Activated naive CD4-positive, alpha-beta T cell treated with anti-CD3 and anti-CD28 coated beads for 36 hours (primary cell): ENCODE measurements at regions of chr4 and their contacts with region 1.

Region 1: DNA sequence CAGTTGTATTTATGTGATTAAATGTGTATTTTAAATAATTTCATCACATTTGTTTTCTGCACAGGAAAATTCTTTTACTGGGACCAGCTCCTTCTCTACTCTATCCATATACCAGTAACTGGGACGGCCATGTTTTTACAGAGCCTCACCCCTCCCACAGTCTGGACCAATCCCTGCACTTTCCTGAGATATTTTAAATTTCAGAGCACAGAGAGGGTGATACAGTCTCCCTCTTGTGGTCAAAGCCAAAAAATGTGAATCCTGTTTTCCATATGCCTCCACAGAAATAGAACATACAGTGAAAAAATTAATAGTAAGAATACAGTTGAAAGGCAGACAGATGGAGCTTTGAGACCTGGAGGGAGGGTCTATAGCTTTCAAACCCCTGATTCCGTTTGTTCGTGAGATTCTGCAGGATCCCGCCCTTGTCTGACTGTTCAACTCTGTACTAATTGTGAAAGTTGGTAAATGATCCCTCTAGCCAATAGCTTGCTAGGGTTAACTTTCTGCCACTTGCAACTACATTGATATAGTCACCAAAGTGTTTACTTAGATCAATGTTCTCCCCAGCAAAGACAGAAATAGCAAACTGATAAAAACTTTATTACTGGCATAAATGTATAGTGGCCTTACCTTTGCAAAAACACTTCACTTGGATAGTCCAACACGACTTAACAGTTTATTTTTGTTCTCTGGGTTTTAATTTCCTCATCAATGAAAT is 172.2 kb downstream of the PPARGC1A start:
- DNase-seq: peak; percentile 13
- H3K4me3 Mint-ChIP-seq: no peak overlapping the region
- H3K27ac Mint-ChIP-seq: no peak overlapping the region
- H3K4me1 Mint-ChIP-seq: no peaks in the 10 kb centered on the region
- H3K27me3 Mint-ChIP-seq: no peaks in the 10 kb centered on the region

Region 2: GRCh38 chr4:22897520-22898108 is 820.1 kb before region 1 on chr4:
- CTCF ChIA-PET with region 1: no interaction called
- intact Hi-C with region 1: loop called (anchors 5 kb)
- DNase-seq: peak; percentile 38
- H3K4me3 Mint-ChIP-seq: no peak overlapping the region
- H3K27ac Mint-ChIP-seq: no peak overlapping the region
- H3K4me1 Mint-ChIP-seq: no peaks in the 10 kb centered on the region
- H3K27me3 Mint-ChIP-seq: peaks cover 6% of the 10 kb centered on the region

Region 3: DNA sequence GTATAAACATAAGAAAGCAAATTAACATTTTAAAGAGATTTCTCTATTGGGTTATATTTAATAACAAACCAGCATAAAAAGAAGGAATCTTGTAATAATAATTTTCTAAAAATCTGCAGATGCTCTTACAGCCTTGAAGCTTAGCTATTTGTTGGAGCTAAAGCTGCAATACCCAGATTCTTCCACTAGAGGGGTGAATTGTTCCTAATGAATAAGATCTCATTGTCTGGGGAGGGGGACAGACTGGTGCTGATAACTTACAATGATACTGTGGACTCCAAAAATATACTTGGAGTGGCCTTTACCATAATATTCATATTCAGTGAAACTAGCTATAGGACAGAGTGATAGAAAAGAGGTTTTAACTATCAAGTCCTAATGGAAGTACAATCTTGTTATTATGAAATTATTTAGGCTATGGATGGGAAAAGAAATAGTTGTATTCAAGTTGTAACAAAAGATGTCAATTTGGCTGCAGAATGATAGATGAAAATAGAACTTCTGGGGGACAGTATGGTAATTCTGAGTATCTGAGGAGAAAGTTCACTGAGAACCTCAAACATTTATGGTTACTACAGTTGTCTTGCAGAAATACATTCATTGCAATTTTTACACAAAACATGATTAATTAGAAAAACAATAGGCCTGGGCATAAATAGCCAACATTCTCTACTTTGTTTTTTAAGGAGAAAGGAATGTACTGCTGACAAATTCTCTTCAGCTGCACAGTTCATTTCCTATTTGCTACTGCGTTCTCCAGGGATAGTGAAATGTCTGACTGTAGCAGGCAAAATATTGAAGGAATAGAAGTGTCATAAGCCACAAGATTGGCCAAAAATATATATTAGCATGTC is 581.7 kb before region 1 on chr4:
- CTCF ChIA-PET with region 1: no interaction called
- intact Hi-C with region 1: loop called (anchors 2 kb)
- DNase-seq: no peak
- H3K4me3 Mint-ChIP-seq: no peak overlapping the region
- H3K27ac Mint-ChIP-seq: no peak overlapping the region
- H3K4me1 Mint-ChIP-seq: no peaks in the 10 kb centered on the region
- H3K27me3 Mint-ChIP-seq: peaks cover 10% of the 10 kb centered on the region

Region 4: GRCh38 chr4:23269566-23269965 is 448.1 kb before region 1 on chr4:
- CTCF ChIA-PET with region 1: no interaction called
- intact Hi-C with region 1: loop called (anchors 10 kb)
- DNase-seq: no peak
- H3K4me3 Mint-ChIP-seq: no peak overlapping the region
- H3K27ac Mint-ChIP-seq: no peak overlapping the region
- H3K4me1 Mint-ChIP-seq: no peaks in the 10 kb centered on the region
- H3K27me3 Mint-ChIP-seq: peaks cover 5% of the 10 kb centered on the region